Activated CD4-positive, alpha-beta T cell treated with anti-CD3 and anti-CD28 coated beads for 36 hours (primary cell): ENCODE measurements at regions of chrX and their contacts with region 1.

Region 1: GRCh38 chrX:139932901-139933796 is at the start of gene ATP11C:
- DNase-seq: peak; percentile 90
- ATAC-seq: peak; percentile 88
- H3K4me3 Mint-ChIP-seq: peak within 1 kb of the TSS; percentile 79
- H3K27ac Mint-ChIP-seq: peak within 1 kb of the TSS; percentile 93
- H3K4me1 Mint-ChIP-seq: peaks cover 22% of the 10 kb centered on the region
- H3K27me3 Mint-ChIP-seq: no peaks in the 10 kb centered on the region
- total RNA-seq, gene ATP11C: 15.0 to 21.6 TPM

Region 2: GRCh38 chrX:139739138-139739537 is 194.0 kb before region 1 on chrX:
- CTCF ChIA-PET with region 1: no interaction called
- POLR2A ChIA-PET with region 1: interaction called, 4 read pairs
- intact Hi-C with region 1: loop called (anchors 2 to 10 kb)
- DNase-seq: peak; percentile 38
- ATAC-seq: peak; percentile 94
- H3K4me3 Mint-ChIP-seq: no peak overlapping the region
- H3K27ac Mint-ChIP-seq: peak overlapping the region; percentile 42
- H3K4me1 Mint-ChIP-seq: peaks cover 12% of the 10 kb centered on the region
- H3K27me3 Mint-ChIP-seq: no peaks in the 10 kb centered on the region

Region 3: GRCh38 chrX:139759637-139760036 is 173.5 kb before region 1 on chrX:
- CTCF ChIA-PET with region 1: no interaction called
- POLR2A ChIA-PET with region 1: no interaction called
- intact Hi-C with region 1: loop called in 1 of 2 experiments (anchors 10 kb)
- DNase-seq: no peak
- ATAC-seq: no peak
- H3K4me3 Mint-ChIP-seq: no peak overlapping the region
- H3K27ac Mint-ChIP-seq: no peak overlapping the region
- H3K4me1 Mint-ChIP-seq: no peaks in the 10 kb centered on the region
- H3K27me3 Mint-ChIP-seq: no peaks in the 10 kb centered on the region